ENCODE measurements at regions of chr4 and their contacts with region 1.

Region 1: DNA sequence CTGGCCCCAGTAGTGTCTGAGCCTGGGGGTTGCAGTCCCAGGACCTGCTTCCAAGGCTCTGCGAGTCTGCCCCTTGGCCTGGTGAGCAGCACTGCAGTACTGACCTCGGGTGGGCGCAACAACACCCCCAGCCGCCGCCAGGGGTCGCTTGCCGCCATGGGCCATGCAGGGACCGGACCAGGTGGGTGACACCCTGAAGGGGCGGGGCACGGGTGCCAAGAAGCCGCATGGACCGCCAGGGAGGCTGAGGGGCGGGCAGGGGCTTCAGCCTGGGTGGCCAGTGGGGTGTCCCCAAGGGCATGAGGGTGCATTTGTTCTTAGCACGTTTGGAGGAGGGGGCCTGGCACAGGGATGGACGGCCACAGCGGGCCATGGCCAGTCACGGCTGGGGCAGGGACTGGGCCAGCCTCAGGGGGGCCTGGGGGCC is 25.0 kb downstream of the TACC3 start:
- DNase-seq: peak; percentile 68 to 75
- H3K4me3 ChIP-seq: no peak overlapping the region
- H3K27ac ChIP-seq: no peak overlapping the region
- H3K4me1 ChIP-seq: peaks cover 0 to 5% of the 10 kb centered on the region in 2 donors
- H3K27me3 ChIP-seq: no peaks in the 10 kb centered on the region
- CTCF ChIP-seq: peak; percentile 59 to 84 (median 70)
- POLR2A ChIP-seq: no peak

Region 2: DNA sequence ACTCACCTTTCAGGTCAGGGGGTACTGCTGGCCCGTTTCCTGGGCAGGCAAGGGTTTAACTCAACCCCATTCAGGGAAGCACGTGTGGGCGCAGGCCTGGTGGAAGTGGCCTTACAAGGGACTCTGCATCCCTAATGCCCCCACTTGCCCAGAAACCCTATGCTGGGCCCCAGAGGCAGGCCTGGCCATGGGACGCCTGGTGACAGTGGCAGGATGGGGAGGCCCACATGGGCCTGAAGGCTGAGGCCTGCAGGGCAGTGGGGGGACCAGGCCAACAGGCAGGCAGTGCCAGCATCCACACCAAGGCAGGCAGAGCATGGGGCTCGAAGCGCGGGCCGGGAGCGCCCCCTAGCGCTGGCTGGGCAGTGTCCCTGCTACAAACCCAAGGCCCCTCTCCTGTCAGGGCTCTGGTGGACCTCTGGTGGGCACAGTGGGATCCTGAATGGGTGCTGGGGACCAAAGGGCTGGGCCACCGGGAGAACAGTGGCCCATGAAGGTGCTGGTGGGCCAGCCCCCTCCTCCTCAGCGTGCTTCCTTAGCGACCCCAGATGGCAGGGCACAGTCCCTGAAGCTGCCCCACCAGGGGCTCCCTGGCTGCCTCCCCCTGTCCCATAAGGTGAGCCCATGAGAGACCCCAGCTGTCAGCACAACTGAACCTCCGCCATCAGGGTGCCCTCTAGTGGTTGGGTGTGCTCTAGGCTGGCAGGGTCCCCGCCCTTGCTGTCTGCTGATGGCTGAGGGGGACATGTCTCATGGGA is 63.7 kb after region 1 on chr4:
- intact Hi-C with region 1: loop called (anchors 5 kb)
- DNase-seq: peak; percentile 54 to 56
- H3K4me3 ChIP-seq: no peak overlapping the region
- H3K27ac ChIP-seq: no peak overlapping the region
- H3K4me1 ChIP-seq: no peaks in the 10 kb centered on the region
- H3K27me3 ChIP-seq: no peaks in the 10 kb centered on the region
- CTCF ChIP-seq: peak; percentile 56 to 82 (median 70)
- POLR2A ChIP-seq: no peak

Region 3: DNA sequence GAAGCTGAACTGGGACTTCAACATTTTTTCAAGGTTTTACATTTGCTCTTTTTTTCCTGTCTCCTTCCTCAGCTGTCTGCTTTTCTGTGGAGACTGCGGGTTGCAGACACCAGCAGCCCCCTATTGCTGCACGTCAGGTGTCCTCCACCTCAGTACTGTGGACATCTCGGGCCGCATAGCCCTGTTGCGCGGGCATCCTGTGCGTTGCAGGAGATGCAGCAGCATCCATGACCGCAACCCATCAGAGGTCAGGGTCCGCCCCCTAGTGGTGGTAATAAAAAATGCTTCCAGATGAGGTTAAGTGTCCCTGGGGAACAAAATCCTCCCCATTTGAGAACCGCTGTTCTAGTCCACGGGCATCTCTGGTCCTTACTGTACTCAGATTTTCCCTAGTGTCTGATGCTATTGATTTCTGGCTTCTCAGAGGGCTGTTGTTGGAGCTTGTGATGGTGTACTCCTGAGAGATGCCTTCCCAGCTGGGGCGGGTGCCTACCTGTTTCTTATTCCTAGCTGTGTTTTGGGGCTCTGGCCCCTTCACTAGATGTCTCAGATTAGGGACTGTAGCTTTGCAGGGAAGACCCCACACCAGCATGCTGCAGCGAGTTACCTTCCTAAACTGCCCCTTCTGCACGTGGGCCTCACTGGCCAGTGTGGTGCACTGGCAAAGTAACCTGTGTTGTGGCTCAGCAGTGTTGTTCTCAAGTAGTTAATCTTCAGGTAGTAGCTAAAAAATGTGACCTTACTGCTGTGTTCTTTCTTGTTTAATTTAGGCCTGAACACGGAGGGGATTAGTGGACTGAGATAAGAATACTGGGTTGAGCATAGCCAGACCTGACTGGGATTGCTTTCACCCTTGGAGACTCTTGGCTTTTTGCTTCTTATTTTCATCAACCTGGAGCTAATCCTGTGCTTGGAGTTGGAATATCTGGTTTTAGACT is 153.1 kb after region 1 on chr4:
- intact Hi-C with region 1: loop called (anchors 2 kb)
- DNase-seq: peak; percentile 68
- H3K4me3 ChIP-seq: no peak overlapping the region
- H3K27ac ChIP-seq: no peak overlapping the region
- H3K4me1 ChIP-seq: no peaks in the 10 kb centered on the region
- H3K27me3 ChIP-seq: no peaks in the 10 kb centered on the region
- CTCF ChIP-seq: peak; percentile 79 to 94 (median 86)
- POLR2A ChIP-seq: no peak

Region 4: DNA sequence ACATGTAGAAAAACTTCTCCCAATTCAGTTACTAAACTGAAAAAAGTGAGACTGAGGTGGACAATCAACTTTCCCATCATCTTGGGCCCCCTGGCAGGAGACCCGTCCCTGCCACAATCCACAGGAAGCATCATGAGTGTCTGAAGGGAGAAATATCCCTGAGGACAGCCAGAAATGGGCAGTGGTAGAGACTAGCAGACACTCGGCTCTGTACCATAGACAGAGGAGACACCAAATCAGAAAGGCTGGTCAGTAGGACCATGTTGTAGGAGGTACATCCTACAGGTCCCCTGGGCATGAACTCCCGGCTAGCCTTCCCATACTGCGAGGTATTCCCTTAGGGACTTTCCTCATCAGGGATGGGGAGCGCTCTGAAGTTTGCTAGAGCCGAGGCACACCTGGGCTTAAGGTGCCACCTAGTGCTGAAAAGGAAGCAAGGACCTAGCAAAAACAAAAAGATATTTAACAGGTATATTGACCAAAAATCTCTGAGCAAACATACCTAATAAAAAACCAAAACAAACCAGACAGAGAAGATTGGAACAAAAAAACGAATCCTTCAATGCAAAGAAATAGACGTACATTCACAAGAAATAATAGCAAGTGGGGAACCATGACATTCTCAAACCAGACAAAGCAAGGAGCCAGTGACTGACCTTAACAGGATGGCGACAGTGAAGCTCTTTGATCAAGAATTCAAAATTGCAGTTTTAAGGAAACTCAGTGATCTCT is 440.0 kb after region 1 on chr4:
- intact Hi-C with region 1: loop called (anchors 5 kb)
- DNase-seq: peak; percentile 51 to 57
- H3K4me3 ChIP-seq: no peak overlapping the region
- H3K27ac ChIP-seq: no peak overlapping the region
- H3K4me1 ChIP-seq: no peaks in the 10 kb centered on the region
- H3K27me3 ChIP-seq: no peaks in the 10 kb centered on the region
- CTCF ChIP-seq: peak in 5 of 6 experiments; percentile 30 to 77 (median 65)
- POLR2A ChIP-seq: no peak

Measured in thyroid gland (tissue), 4 donors.